Psoas muscle (tissue), 8 donors: ENCODE measurements at regions of chr6 and their contacts with region 1.

Region 1: DNA sequence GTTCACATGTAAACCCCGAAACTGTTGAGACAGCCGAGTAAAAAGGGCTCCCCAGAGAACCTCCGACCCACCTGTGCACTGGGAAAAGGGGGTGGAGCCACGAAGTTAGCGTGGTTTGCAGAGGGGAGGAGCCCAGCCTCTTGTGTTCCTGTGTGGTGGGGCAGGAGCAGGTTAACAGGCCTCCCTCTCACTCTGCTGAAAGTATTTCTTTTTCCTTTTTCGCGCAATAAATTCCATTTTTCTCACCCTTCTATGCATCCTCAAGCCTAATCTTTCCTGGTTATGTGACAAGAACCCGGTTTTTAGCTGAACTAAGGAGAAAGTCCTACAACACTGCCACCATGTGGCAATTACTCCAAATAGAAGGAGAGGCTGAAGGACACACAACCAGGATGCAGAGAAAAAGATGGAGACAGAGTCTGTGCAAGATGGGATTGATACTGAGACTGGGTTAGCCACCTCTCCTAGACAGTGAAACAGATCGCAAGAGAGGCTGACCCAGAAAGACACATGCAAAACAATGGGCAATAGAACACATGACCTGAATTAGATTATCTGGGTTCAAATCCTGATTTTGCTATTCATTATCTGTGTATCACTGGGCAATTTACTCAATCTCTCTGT is 168.7 kb upstream of the PRSS16 start:
- DNase-seq: no peak
- ATAC-seq: peak in 3 of 4 donors; percentile 62 to 90 (median 66)
- H3K4me3 ChIP-seq: peak overlapping the region; percentile 39
- H3K27ac ChIP-seq: no peak overlapping the region
- H3K4me1 ChIP-seq: no peaks in the 10 kb centered on the region
- H3K27me3 ChIP-seq: peaks cover 0 to 12% (median 11%) of the 10 kb centered on the region in 3 donors
- CTCF ChIP-seq: peak; percentile 63

Region 2: DNA sequence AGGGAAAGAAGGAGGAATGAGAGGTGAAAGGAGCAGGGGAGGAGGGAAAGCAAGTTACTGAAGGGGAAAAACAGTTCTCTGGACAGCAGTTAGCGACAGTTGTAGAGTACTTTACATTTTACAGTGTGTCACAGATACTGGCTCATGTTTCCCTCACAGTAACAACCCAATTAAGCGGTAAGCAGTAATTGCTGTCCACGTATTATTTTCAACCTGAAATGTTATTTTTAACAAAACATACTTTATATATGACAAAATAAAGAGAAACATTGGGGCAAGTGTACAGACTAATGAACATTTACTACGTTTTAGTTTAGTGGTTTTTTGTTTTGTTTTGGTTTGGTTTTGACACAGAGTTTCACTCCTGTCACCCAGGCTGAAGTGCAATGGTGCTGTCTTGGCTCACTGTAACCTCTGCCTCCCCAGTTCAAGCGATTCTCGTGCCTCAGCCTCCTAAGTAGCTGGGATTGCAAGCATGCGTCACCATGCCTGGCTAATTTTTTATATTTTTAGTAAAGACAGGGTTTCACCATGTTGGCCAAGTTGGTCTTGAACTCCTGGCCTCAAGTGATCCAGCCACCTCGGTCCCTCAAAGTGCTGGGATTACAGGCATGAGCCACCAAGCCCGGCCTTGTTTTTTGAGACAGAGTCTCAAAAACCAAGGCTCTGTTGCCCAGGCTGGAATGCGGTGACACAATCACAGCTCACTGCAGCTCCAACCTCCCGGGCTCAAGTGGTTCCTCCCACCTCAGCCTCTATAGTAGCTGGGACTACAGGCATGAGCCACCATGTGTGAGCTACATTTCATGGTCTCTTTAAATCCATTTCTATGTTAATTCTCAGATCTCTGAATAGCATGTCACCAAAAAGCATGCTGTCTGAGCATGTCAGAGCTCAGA is 736.5 kb before region 1 on chr6:
- intact Hi-C with region 1: loop called in 1 of 2 experiments (anchors 5 kb)
- DNase-seq: no peak
- ATAC-seq: peak in 1 of 4 donors; percentile 16
- H3K4me3 ChIP-seq: no peak overlapping the region
- H3K27ac ChIP-seq: no peak overlapping the region
- H3K4me1 ChIP-seq: no peaks in the 10 kb centered on the region
- H3K27me3 ChIP-seq: peaks cover 0 to 9% (median 0%) of the 10 kb centered on the region in 3 donors
- CTCF ChIP-seq: no peak

Region 3: DNA sequence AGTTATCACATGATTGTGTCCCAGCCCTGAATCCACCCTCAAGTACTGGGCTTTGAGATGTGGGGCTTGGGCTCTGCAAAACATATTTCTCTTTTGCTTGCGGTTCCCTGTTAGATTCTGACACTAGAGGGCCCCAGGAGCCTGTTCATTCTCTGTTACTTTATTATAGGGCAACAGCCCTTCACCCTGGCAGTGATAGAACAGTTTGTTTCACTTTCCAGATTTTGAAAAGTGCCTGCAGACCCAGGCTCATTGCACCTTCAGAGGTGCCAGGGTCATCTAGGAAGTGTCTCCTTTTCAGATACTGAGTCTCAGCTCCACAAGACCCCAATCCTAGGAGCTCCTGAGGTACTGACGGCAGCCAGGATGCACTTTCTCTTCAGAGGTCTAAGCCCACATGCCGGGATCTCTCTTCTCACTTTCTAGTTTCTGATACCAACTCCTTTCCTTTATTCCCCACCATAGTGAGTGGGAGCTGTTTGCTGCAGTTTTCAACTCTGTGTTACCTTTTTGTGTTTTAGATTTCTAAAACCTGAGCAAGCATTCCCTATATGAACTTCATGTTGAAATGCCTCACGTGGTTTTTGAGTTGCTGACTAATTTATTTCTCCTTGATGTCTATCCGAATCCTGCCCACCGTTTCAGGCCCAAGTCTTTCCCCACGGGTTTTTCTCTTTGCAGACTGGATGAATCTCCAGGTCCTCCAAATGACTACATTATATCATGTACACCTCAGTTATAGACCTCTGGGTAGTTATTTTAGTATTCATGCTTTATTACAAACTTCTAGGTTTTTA is 471.2 kb before region 1 on chr6:
- intact Hi-C with region 1: loop called (anchors 2 to 5 kb)
- DNase-seq: no peak
- ATAC-seq: peak in 3 of 4 donors; percentile 47 to 74 (median 71)
- H3K4me3 ChIP-seq: peak overlapping the region; percentile 36
- H3K27ac ChIP-seq: no peak overlapping the region
- H3K4me1 ChIP-seq: no peaks in the 10 kb centered on the region
- H3K27me3 ChIP-seq: no peaks in the 10 kb centered on the region
- CTCF ChIP-seq: peak; percentile 58